HEK293 (cell line): ENCODE measurements at regions of chr5 and their contacts with region 1.

Region 1: GRCh38 chr5:79133657-79134451 is 22.2 kb downstream of the BHMT start:
- H3K4me3 ChIP-seq: peak overlapping the region; percentile 33
- H3K27ac ChIP-seq: peak overlapping the region; percentile 36; the same call in 1 of the 2 replicates
- H3K4me1 ChIP-seq: no peaks in the 10 kb centered on the region
- CTCF ChIP-seq: peak; percentile 73; the same call in 1 of the 2 replicates

Region 2: GRCh38 chr5:78527054-78527859 is 606.6 kb before region 1 on chr5:
- CTCF ChIA-PET with region 1: interaction called, 11 read pairs
- POLR2A ChIA-PET with region 1: no interaction called
- H3K4me3 ChIP-seq: no peak overlapping the region
- H3K27ac ChIP-seq: no peak overlapping the region
- H3K4me1 ChIP-seq: peaks cover 11% of the 10 kb centered on the region
- CTCF ChIP-seq: no peak

Region 3: GRCh38 chr5:78984439-78985115 is 149.3 kb before region 1 on chr5:
- CTCF ChIA-PET with region 1: interaction called, 10 read pairs
- POLR2A ChIA-PET with region 1: no interaction called
- H3K4me3 ChIP-seq: peak overlapping the region; percentile 81
- H3K27ac ChIP-seq: peak overlapping the region; percentile 98
- H3K4me1 ChIP-seq: peaks cover 8% of the 10 kb centered on the region
- CTCF ChIP-seq: peak; percentile 44

Region 4: GRCh38 chr5:79030663-79031484 is 103.0 kb before region 1 on chr5:
- CTCF ChIA-PET with region 1: interaction called, 303 read pairs
- POLR2A ChIA-PET with region 1: no interaction called
- H3K4me3 ChIP-seq: no peak overlapping the region
- H3K27ac ChIP-seq: no peak overlapping the region
- H3K4me1 ChIP-seq: no peaks in the 10 kb centered on the region
- CTCF ChIP-seq: no peak

Region 5: GRCh38 chr5:79157305-79157704 is 23.5 kb after region 1 on chr5:
- CTCF ChIA-PET with region 1: interaction called, 16 read pairs
- POLR2A ChIA-PET with region 1: no interaction called
- H3K4me3 ChIP-seq: no peak overlapping the region
- H3K27ac ChIP-seq: no peak overlapping the region
- H3K4me1 ChIP-seq: no peaks in the 10 kb centered on the region
- CTCF ChIP-seq: no peak

Region 6: DNA sequence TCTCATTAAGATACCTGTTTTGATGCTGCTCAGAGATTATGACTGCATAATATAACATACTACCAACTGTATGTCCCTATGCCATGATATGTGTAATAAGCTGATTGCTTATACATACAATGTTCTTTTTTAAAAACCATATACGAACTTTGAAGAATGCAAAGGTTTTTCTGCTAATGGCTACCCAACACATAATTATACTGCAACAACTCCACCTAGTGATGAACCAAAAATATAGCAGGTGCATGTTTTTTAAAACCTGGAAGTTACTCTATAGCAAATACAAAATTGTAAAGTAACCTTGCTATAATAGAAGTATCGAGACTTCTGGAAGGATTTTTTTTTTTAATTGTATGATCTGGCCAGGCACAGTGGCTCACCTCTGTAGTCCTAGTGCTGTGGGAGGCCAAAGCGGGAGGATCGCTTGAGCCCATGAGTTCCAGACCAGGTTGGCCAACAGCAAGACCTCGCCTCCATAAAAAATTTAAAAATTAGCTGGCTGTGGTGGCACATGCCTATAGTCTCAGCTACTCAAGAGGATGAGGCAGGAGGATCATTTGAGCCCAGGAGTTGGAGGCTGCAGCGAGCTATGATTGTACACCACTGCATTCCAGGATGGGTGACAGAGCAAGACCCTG is 331.0 kb after region 1 on chr5:
- CTCF ChIA-PET with region 1: interaction called, 88 read pairs
- POLR2A ChIA-PET with region 1: no interaction called
- H3K4me3 ChIP-seq: no peak overlapping the region
- H3K27ac ChIP-seq: no peak overlapping the region
- H3K4me1 ChIP-seq: no peaks in the 10 kb centered on the region
- CTCF ChIP-seq: peak; percentile 45